CD8-positive, alpha-beta memory T cell (primary cell): ENCODE measurements at regions of chr5 and their contacts with region 1.

Region 1: GRCh38 chr5:179806250-179807222 is at the start of gene MGAT4B:
- DNase-seq: peak; percentile 48 to 70 (median 53)
- H3K4me3 ChIP-seq: peak within 1 kb of the TSS; percentile 41
- H3K4me3 Mint-ChIP-seq: peak within 1 kb of the TSS; percentile 66 to 91 (median 79)
- H3K27ac ChIP-seq: peak within 1 kb of the TSS; percentile 54
- H3K27ac Mint-ChIP-seq: peak within 1 kb of the TSS in 5 of 8 donors; percentile 26 to 72 (median 56)
- H3K4me1 ChIP-seq: peaks cover 33% of the 10 kb centered on the region
- H3K4me1 Mint-ChIP-seq: peaks cover 27 to 37% (median 28%) of the 10 kb centered on the region in 3 donors
- H3K27me3 ChIP-seq: no peaks in the 10 kb centered on the region
- H3K27me3 Mint-ChIP-seq: no peaks in the 10 kb centered on the region
- total RNA-seq, gene MGAT4B: 94.0 to 103 TPM

Region 2: DNA sequence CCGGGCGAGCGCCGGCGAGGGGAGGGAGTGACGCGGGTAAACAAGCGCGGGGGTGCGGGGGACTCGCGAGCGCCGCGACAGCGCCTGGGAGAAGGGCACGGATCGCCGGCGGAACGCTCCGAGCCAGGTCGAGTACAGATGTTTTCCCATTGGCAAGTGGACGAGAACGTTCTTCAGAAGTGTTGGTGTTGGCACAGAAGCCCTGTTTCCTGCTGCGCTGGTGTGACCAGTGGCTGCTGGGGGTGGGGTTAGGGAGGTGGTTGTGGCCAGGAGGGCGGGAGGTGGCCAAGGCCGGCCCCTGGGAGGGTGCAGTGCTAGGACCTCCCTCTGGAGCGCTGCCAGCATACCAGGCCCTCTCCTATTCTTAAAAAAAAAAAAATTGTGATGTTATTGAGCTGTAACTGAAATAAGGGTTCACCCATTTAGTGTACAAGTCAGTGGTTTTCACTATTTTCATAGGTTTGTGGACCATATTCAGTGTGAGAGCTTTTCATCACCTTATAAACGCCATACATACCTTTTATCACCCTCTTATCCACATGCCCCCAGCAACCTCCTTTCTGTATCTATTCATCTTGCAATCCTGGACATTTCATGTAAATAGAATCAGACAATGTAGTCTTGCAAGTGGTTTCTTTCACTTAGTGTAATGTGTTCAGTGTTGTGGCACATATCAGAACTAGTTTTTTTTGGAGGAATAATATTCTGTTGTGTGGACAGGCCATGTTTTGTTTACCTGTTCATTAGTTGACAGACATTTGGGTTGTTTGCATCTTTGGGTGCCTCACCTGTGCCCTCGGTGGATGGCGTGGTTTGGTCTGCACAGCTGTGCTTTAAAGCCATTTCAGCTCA is 15.3 kb after region 1 on chr5:
- CTCF ChIA-PET with region 1: interaction called, 21 read pairs
- POLR2A ChIA-PET with region 1: interaction called, 12 read pairs
- DNase-seq: peak; percentile 85 to 94 (median 88)
- H3K4me3 ChIP-seq: peak overlapping the region; percentile 83
- H3K4me3 Mint-ChIP-seq: peak overlapping the region; percentile 94 to 99 (median 98)
- H3K27ac ChIP-seq: peak overlapping the region; percentile 96
- H3K27ac Mint-ChIP-seq: peak overlapping the region; percentile 93 to 100 (median 98)
- H3K4me1 ChIP-seq: peaks cover 36% of the 10 kb centered on the region
- H3K4me1 Mint-ChIP-seq: peaks cover 40 to 71% (median 47%) of the 10 kb centered on the region in 3 donors
- H3K27me3 ChIP-seq: no peaks in the 10 kb centered on the region
- H3K27me3 Mint-ChIP-seq: peaks cover 0 to 8% of the 10 kb centered on the region in 2 donors

Region 3: GRCh38 chr5:179907570-179908324 is 101.2 kb after region 1 on chr5 and contains the start of gene TBC1D9B:
- CTCF ChIA-PET with region 1: interaction called, 37 read pairs
- POLR2A ChIA-PET with region 1: no interaction called
- DNase-seq: peak; percentile 65 to 80 (median 74)
- H3K4me3 ChIP-seq: peak within 1 kb of the TSS; percentile 44
- H3K4me3 Mint-ChIP-seq: peak within 1 kb of the TSS; percentile 84 to 91 (median 86)
- H3K27ac ChIP-seq: peak within 1 kb of the TSS; percentile 51
- H3K27ac Mint-ChIP-seq: peak within 1 kb of the TSS; percentile 72 to 92 (median 78)
- H3K4me1 ChIP-seq: peaks cover 17% of the 10 kb centered on the region
- H3K4me1 Mint-ChIP-seq: peaks cover 16 to 30% (median 17%) of the 10 kb centered on the region in 3 donors
- H3K27me3 ChIP-seq: no peaks in the 10 kb centered on the region
- H3K27me3 Mint-ChIP-seq: no peaks in the 10 kb centered on the region
- total RNA-seq, gene TBC1D9B: 73.7 to 74.8 TPM